A549 (cell line): ENCODE measurements at regions of chr2 and their contacts with region 1.

Region 1: DNA sequence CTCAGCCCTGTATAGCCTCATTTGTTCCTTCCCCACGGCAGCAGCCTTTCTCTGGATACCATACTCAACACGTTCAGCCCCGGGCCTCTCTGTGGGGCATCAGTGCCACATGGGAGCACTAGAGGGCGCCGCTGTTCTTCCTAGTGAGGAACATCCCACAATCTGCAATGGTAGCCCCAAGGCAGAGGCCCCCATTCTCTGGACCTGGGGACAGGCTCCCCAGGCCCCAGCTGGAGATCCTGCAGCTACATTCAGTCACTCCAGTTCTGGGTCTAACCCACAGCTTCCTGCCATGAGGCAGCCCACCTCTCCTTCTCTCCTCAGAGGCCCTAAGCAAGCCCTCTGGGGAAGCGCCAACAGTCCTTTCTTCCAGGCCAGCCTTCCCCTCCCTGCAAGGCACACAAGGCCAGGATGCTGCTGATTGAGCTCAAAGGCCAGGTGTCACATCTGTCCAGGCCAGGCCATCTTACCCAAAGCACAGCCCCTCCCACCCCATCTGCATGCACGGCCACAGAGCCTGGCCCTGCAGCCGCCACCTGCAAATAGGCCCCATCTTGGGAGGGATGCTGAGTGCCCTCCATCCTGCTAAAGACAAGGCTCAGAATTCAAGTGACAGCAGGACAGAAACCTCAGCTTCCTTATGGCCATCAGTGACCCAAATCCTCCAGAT is 14.3 kb upstream of the SFXN5 start:
- DNase-seq: peak; percentile 74 to 87
- ATAC-seq: peak; percentile 78 to 92; a peak in 5 of 6 replicates
- H3K4me3 ChIP-seq: no peak overlapping the region
- H3K27ac ChIP-seq: no peak overlapping the region
- H3K4me1 ChIP-seq: peaks cover 18% of the 10 kb centered on the region
- CTCF ChIP-seq: peak; percentile 98
- EP300 ChIP-seq: no peak
- POLR2A ChIP-seq: no peak
- RAD21 ChIP-seq: peak; percentile 97 to 98

Region 2: GRCh38 chr2:72439892-72440291 is 645.9 kb before region 1 on chr2:
- CTCF ChIA-PET with region 1: no interaction called
- POLR2A ChIA-PET with region 1: no interaction called
- DNase-seq: no peak
- ATAC-seq: no peak
- H3K4me3 ChIP-seq: no peak overlapping the region
- H3K27ac ChIP-seq: no peak overlapping the region
- H3K4me1 ChIP-seq: no peaks in the 10 kb centered on the region
- CTCF ChIP-seq: no peak
- EP300 ChIP-seq: no peak
- POLR2A ChIP-seq: no peak
- RAD21 ChIP-seq: no peak

Region 3: DNA sequence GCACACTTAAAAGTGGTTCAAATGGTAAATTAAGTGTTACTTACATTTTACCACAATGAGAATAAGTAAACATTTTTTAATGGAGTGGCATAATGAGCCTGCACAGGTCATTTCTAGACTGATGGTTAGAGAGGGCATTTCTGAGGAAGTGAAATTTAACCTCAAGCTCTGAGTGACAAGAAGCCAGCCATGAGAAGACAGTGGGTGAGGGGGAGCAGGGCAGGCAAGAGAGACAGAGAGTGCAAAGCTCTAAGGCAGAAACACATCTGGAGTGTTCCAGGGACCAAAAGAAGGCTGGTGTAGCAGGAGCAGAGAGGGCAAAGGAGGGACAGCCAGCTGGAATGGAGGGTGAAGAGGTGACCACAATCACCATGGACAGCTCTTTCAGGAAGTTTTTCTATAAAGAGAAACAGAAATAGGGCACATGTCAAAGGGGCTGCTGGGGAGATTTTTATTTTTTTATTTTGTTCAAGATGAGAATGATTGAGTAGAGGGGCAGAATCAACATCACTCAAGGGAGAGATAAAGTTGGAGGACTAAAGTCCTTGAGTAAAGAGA is 239.2 kb before region 1 on chr2:
- CTCF ChIA-PET with region 1: no interaction called
- POLR2A ChIA-PET with region 1: no interaction called
- DNase-seq: no peak
- ATAC-seq: no peak
- H3K4me3 ChIP-seq: no peak overlapping the region
- H3K27ac ChIP-seq: no peak overlapping the region
- H3K4me1 ChIP-seq: no peaks in the 10 kb centered on the region
- CTCF ChIP-seq: no peak
- EP300 ChIP-seq: no peak
- POLR2A ChIP-seq: no peak
- RAD21 ChIP-seq: no peak

Region 4: DNA sequence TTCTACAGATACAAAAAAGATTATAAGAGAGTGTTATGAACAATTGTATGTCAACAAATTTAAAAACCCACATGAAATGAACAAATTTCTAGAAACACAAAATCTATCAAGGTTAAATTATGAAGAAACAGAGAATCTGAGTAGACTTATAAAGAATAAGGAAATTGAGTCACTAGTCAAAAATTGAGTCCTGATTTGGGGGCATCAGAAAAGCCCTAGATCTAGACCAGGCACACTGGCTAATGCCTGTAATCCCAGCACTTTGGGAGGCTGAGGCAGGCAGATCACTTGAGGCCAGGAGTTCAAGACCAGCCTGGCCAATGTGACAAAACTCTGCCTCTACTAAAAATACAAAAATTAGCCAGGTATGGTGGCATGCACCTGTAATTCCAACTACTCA is 213.9 kb before region 1 on chr2:
- CTCF ChIA-PET with region 1: no interaction called
- POLR2A ChIA-PET with region 1: no interaction called
- DNase-seq: no peak
- ATAC-seq: no peak
- H3K4me3 ChIP-seq: no peak overlapping the region
- H3K27ac ChIP-seq: no peak overlapping the region
- H3K4me1 ChIP-seq: no peaks in the 10 kb centered on the region
- CTCF ChIP-seq: no peak
- EP300 ChIP-seq: no peak
- POLR2A ChIP-seq: no peak
- RAD21 ChIP-seq: no peak

Region 5: GRCh38 chr2:73063909-73064875 is 21.6 kb before region 1 on chr2:
- CTCF ChIA-PET with region 1: interaction called, 23 read pairs
- POLR2A ChIA-PET with region 1: no interaction called
- DNase-seq: peak; percentile 62 to 77
- ATAC-seq: peak; percentile 93 to 96
- H3K4me3 ChIP-seq: peak overlapping the region; percentile 12; the same call in 1 of the 3 replicates
- H3K27ac ChIP-seq: peak overlapping the region; percentile 92 to 95
- H3K4me1 ChIP-seq: peaks cover 52% of the 10 kb centered on the region
- CTCF ChIP-seq: no peak
- EP300 ChIP-seq: no peak
- POLR2A ChIP-seq: no peak
- RAD21 ChIP-seq: peak in 1 of 2 experiments; percentile 11; a peak in 1 of 5 replicates

Region 6: DNA sequence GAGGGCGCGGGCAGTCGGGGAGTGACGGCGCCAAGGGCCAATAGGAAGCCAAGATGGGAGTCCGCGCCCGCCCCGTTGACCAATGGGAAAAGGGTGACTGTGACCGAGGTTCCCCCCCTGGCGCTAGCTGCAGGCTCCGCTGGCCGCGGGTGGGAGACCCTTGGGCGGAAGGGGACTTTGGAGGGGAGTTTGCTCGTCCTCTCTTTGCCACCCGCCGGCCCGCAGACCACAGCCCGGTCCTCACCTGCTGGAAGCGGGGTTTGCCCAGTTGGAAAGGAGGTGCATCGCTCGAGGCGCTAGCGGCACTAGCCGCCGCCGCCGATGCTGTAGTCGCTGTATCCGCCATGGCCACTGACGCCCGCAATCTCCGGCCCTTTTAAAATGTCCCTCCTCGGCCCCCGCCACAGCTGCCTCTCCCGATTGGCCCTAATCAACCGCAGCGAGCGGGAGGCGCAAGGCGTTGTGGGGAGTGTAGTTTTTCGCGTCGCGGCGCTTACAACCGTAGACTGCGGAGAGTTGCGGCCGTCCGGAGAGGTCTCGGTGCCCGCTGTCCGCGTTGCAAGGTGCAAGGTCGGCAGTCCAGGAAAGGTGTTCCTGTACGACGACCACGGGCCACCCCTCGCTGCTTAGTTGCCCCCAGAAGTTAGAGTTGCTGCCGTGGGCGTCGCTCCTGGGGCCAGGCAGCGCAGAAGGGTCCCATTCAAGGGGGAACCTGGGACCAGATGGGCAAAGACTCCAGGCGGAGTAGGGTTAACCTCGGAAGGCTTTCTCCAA is 14.3 kb before region 1 on chr2 and contains the start of gene SFXN5:
- CTCF ChIA-PET with region 1: interaction called, 90 read pairs
- POLR2A ChIA-PET with region 1: interaction called, 3 read pairs
- DNase-seq: peak; percentile 97 to 98
- ATAC-seq: peak; percentile 92 to 95
- H3K4me3 ChIP-seq: peak within 1 kb of the TSS; percentile 79
- H3K27ac ChIP-seq: peak within 1 kb of the TSS; percentile 87 to 93
- H3K4me1 ChIP-seq: peaks cover 29% of the 10 kb centered on the region
- CTCF ChIP-seq: no peak
- EP300 ChIP-seq: no peak
- POLR2A ChIP-seq: peak; percentile 69
- RAD21 ChIP-seq: no peak; a peak in 1 of 5 replicates
- polyA plus RNA-seq, gene SFXN5: 16.7 and 22.0 TPM in 2 replicates

Region 7: GRCh38 chr2:73100956-73101355 is 15.1 kb after region 1 on chr2:
- CTCF ChIA-PET with region 1: interaction called, 74 read pairs
- POLR2A ChIA-PET with region 1: no interaction called
- DNase-seq: no peak
- ATAC-seq: no peak
- H3K4me3 ChIP-seq: no peak overlapping the region
- H3K27ac ChIP-seq: no peak overlapping the region
- H3K4me1 ChIP-seq: no peaks in the 10 kb centered on the region
- CTCF ChIP-seq: no peak
- EP300 ChIP-seq: no peak
- POLR2A ChIP-seq: no peak
- RAD21 ChIP-seq: no peak

Region 8: GRCh38 chr2:73107211-73107926 is 21.5 kb after region 1 on chr2:
- CTCF ChIA-PET with region 1: interaction called, 114 read pairs
- POLR2A ChIA-PET with region 1: interaction called, 5 read pairs
- DNase-seq: no peak
- ATAC-seq: no peak
- H3K4me3 ChIP-seq: no peak overlapping the region
- H3K27ac ChIP-seq: no peak overlapping the region
- H3K4me1 ChIP-seq: peaks cover 14% of the 10 kb centered on the region
- CTCF ChIP-seq: no peak
- EP300 ChIP-seq: no peak
- POLR2A ChIP-seq: no peak
- RAD21 ChIP-seq: no peak

Region 9: DNA sequence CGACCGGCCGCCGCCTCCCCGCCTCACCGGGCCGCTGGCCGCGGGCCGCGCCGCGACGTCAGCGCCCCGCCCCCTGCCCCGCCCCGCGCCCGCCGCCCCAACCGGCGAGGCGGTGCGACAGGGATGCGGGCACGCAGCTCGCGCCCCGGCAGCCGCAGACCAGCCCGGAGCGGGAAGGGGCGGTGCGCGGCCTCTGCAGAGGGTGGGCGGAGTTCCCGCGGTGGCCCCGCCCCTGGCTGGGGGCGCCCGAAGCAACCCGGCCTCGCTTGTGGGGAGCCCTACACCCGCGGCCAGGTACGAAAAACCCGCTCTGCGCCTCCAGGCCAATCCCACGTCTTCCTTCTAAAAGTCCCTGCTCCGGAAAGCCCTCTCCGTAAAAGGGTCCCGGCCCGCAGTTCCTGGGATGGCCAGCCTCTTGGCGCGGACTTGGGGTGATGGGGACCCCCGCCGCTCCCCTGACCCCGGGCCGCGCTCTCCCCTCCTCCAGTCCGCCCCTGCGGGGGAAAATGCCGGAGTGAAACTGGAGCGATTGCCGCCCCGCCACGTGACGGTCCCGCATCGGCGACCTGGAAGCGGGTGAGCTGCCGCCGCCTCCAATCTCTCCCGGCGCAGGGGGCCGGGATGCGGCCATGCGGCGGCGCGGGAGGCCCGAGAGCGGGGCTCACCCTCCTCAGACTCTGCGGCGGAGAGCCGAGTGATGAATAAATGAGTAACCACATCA is 27.2 kb after region 1 on chr2 and contains the start of gene RAB11FIP5:
- CTCF ChIA-PET with region 1: interaction called, 114 read pairs
- POLR2A ChIA-PET with region 1: interaction called, 7 read pairs
- DNase-seq: peak; percentile 67 to 81
- ATAC-seq: peak; percentile 77 to 88
- H3K4me3 ChIP-seq: peak within 1 kb of the TSS; percentile 91
- H3K27ac ChIP-seq: peak within 1 kb of the TSS; percentile 86 to 92
- H3K4me1 ChIP-seq: peaks cover 20% of the 10 kb centered on the region
- CTCF ChIP-seq: no peak
- EP300 ChIP-seq: no peak
- POLR2A ChIP-seq: peak; percentile 23; the same call in 1 of the 2 replicates
- RAD21 ChIP-seq: no peak; a peak in 1 of 5 replicates
- polyA plus RNA-seq, gene RAB11FIP5: 21.6 and 30.8 TPM in 2 replicates

Region 10: GRCh38 chr2:73163483-73164367 is 77.9 kb after region 1 on chr2:
- CTCF ChIA-PET with region 1: interaction called, 500 read pairs
- POLR2A ChIA-PET with region 1: no interaction called
- DNase-seq: peak; percentile 82 to 88
- ATAC-seq: peak; percentile 94 to 99
- H3K4me3 ChIP-seq: no peak overlapping the region
- H3K27ac ChIP-seq: no peak overlapping the region
- H3K4me1 ChIP-seq: no peaks in the 10 kb centered on the region
- CTCF ChIP-seq: peak; percentile 96
- EP300 ChIP-seq: no peak
- POLR2A ChIP-seq: no peak
- RAD21 ChIP-seq: peak; percentile 95 to 96